CD4-positive, alpha-beta memory T cell (primary cell): ENCODE measurements at regions of chr17 and their contacts with region 1.

Region 1: DNA sequence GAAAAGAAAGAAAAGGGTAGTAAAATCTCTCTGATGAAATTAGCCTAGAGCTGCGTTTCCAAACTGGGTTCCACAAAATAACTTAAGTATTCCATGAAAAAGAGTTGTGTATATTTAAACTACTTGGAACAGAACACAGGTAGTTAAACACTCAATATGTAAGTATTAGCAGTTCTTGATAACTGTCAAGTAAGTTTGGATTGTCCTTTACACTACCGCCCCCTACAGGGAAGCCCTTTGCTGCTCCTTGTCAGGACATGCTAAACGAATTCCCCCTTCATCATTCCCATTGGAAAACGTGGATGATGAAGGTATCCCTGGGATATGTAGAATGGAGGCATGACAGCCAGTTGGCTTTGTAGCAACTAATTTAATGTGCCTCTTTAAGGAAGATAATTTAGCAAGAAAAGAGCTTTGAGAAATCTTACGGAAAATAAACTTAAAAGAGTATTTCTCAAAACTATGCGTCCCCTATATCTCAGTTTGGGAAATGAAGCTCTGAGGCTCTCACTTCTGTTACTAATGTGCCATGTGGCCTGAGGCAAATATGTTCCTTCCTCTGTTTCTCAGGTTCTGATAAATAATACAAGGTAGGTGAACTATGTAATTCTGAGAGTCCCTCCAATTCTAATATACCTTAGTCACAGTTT is 18.8 kb downstream of the NCBP3 start:
- DNase-seq: peak; percentile 67 to 79 (median 74)
- H3K4me3 ChIP-seq: no peak overlapping the region
- H3K4me3 Mint-ChIP-seq: no peak overlapping the region
- H3K27ac ChIP-seq: no peak overlapping the region
- H3K27ac Mint-ChIP-seq: peak overlapping the region in 3 of 7 donors; percentile 42 to 74 (median 70)
- H3K4me1 ChIP-seq: no peaks in the 10 kb centered on the region
- H3K4me1 Mint-ChIP-seq: peaks cover 1 to 5% (median 4%) of the 10 kb centered on the region in 4 donors
- H3K27me3 ChIP-seq: no peaks in the 10 kb centered on the region
- H3K27me3 Mint-ChIP-seq: no peaks in the 10 kb centered on the region

Region 2: GRCh38 chr17:3048767-3049471 is 778.3 kb before region 1 on chr17:
- CTCF ChIA-PET with region 1: no interaction called
- POLR2A ChIA-PET with region 1: no interaction called
- intact Hi-C with region 1: loop called (anchors 5 kb)
- DNase-seq: peak; percentile 88 to 95 (median 93)
- H3K4me3 ChIP-seq: peak overlapping the region; percentile 66 to 94
- H3K4me3 Mint-ChIP-seq: peak overlapping the region; percentile 89 to 96 (median 94)
- H3K27ac ChIP-seq: peak overlapping the region; percentile 48
- H3K27ac Mint-ChIP-seq: peak overlapping the region; percentile 76 to 93 (median 91)
- H3K4me1 ChIP-seq: peaks cover 15% of the 10 kb centered on the region
- H3K4me1 Mint-ChIP-seq: peaks cover 0 to 14% (median 6%) of the 10 kb centered on the region in 4 donors
- H3K27me3 ChIP-seq: no peaks in the 10 kb centered on the region
- H3K27me3 Mint-ChIP-seq: no peaks in the 10 kb centered on the region

Region 3: GRCh38 chr17:3683054-3683511 is 144.2 kb before region 1 on chr17:
- CTCF ChIA-PET with region 1: interaction called, 36 read pairs
- POLR2A ChIA-PET with region 1: no interaction called
- intact Hi-C with region 1: loop called (anchors 2 kb)
- DNase-seq: peak in 4 of 5 donors; percentile 55 to 62 (median 58)
- H3K4me3 ChIP-seq: no peak overlapping the region
- H3K4me3 Mint-ChIP-seq: peak overlapping the region in 1 of 8 donors; percentile 21
- H3K27ac ChIP-seq: no peak overlapping the region
- H3K27ac Mint-ChIP-seq: peak overlapping the region in 2 of 7 donors; percentile 65 to 70
- H3K4me1 ChIP-seq: peaks cover 9% of the 10 kb centered on the region
- H3K4me1 Mint-ChIP-seq: peaks cover 6 to 25% (median 7%) of the 10 kb centered on the region in 4 donors
- H3K27me3 ChIP-seq: no peaks in the 10 kb centered on the region
- H3K27me3 Mint-ChIP-seq: no peaks in the 10 kb centered on the region

Region 4: DNA sequence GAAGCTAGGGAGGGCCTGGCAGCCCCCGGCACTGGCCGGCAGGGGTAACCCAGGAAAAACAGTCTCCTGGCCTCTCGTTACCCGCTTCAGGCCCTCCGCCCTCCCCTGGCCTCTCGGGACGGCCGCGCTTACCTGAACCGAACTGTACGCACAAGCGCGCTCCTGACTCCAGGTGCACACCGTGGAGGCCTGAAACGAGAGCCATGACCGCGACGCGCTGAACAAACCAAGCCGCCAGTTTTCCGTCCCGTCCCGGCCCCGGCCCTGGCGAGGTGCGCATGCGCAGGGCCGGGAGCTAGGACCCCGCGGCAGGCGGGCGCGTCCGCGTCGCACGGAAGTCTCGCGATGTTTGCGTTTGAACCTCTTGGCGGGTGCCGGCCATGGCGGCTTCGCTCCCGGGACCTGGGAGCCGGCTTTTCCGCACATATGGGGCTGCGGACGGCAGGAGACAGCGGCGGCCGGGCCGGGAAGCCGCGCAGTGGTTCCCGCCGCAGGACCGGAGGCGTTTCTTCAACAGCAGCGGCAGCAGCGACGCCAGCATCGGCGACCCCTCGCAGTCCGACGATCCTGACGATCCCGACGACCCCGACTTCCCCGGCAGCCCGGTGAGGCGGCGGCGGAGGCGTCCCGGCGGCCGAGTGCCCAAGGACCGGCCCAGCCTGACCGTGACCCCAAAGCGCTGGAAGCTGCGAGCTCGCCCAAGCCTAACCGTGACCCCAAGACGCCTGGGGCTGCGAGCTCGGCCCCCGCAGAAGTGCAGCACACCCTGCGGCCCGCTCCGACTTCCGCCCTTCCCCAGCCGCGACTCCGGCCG is 103.5 kb before region 1 on chr17 and contains the start of gene HASPIN:
- CTCF ChIA-PET with region 1: interaction called, 10 read pairs
- POLR2A ChIA-PET with region 1: no interaction called
- intact Hi-C with region 1: no loop called
- DNase-seq: peak; percentile 88 to 92 (median 91)
- H3K4me3 ChIP-seq: peak within 1 kb of the TSS; percentile 59 to 95
- H3K4me3 Mint-ChIP-seq: peak within 1 kb of the TSS; percentile 86 to 95 (median 94)
- H3K27ac ChIP-seq: peak within 1 kb of the TSS; percentile 74
- H3K27ac Mint-ChIP-seq: peak within 1 kb of the TSS; percentile 75 to 95 (median 93)
- H3K4me1 ChIP-seq: peaks cover 36% of the 10 kb centered on the region
- H3K4me1 Mint-ChIP-seq: peaks cover 15 to 44% (median 28%) of the 10 kb centered on the region in 4 donors
- H3K27me3 ChIP-seq: no peaks in the 10 kb centered on the region
- H3K27me3 Mint-ChIP-seq: no peaks in the 10 kb centered on the region
- total RNA-seq, gene HASPIN: 0.28 to 0.41 TPM

Region 5: DNA sequence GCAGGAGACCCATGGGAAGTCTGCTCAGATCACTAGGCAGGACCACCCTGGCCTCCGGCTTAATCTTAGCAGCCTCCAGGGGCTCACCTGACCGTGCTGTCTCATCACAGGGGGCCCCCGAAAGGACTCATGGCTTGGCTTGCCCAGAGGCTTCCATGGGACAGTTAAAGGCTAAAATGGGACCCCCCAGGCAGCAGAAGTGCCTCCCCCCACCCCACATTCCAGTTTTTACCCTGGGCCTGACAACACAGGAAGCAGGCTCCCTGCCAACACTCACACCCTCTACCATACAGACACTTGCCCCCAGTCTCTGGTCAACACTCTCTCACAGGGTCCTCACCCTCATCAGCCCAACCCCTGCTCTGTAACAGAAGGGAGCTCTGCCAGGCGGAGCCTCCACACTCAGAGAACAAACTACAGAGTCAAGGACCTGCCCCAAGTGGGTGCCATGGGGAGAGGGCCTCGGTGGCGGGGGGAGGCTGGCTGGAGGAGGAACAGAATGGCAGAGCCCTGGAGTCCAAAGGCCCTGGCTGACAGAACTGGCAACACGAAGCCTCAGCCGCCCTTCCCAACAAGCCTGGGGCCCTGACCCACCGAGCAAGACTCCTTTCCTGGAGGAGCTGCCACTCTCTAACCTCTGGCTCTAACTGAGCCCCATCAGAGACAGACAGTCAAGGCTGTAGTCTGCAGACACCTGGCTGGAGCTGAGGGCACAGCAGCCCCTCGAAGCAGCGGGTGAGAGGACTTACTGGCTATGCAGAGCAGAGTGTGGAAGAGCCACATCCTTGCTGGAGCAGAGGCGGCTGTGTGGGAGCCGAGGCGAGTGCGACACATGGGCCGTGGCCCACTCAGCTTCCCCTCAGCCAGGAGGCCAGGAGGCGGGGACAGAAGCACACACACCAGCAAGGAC is 26.6 kb before region 1 on chr17 and contains the start of gene ITGAE:
- CTCF ChIA-PET with region 1: no interaction called
- POLR2A ChIA-PET with region 1: no interaction called
- intact Hi-C with region 1: no loop called
- DNase-seq: no peak
- H3K4me3 ChIP-seq: no peak within 1 kb of the TSS
- H3K4me3 Mint-ChIP-seq: peak within 1 kb of the TSS in 3 of 8 donors; percentile 44 to 63 (median 61)
- H3K27ac ChIP-seq: no peak within 1 kb of the TSS
- H3K27ac Mint-ChIP-seq: peak within 1 kb of the TSS in 2 of 7 donors; percentile 36 to 65
- H3K4me1 ChIP-seq: peaks cover 13% of the 10 kb centered on the region
- H3K4me1 Mint-ChIP-seq: peaks cover 7 to 21% (median 13%) of the 10 kb centered on the region in 4 donors
- H3K27me3 ChIP-seq: no peaks in the 10 kb centered on the region
- H3K27me3 Mint-ChIP-seq: no peaks in the 10 kb centered on the region
- total RNA-seq, gene ITGAE: 17.2 to 18.7 TPM

Region 6: GRCh38 chr17:3815925-3816324 is 11.3 kb before region 1 on chr17:
- CTCF ChIA-PET with region 1: interaction called, 10 read pairs
- POLR2A ChIA-PET with region 1: no interaction called
- intact Hi-C with region 1: no loop called
- DNase-seq: no peak
- H3K4me3 ChIP-seq: no peak overlapping the region
- H3K4me3 Mint-ChIP-seq: no peak overlapping the region
- H3K27ac ChIP-seq: no peak overlapping the region
- H3K27ac Mint-ChIP-seq: no peak overlapping the region
- H3K4me1 ChIP-seq: no peaks in the 10 kb centered on the region
- H3K4me1 Mint-ChIP-seq: no peaks in the 10 kb centered on the region
- H3K27me3 ChIP-seq: no peaks in the 10 kb centered on the region
- H3K27me3 Mint-ChIP-seq: no peaks in the 10 kb centered on the region

Region 7: GRCh38 chr17:5155495-5155894 is 1328.2 kb after region 1 on chr17:
- CTCF ChIA-PET with region 1: no interaction called
- POLR2A ChIA-PET with region 1: no interaction called
- intact Hi-C with region 1: no loop called
- DNase-seq: no peak
- H3K4me3 ChIP-seq: no peak overlapping the region
- H3K4me3 Mint-ChIP-seq: no peak overlapping the region
- H3K27ac ChIP-seq: no peak overlapping the region
- H3K27ac Mint-ChIP-seq: no peak overlapping the region
- H3K4me1 ChIP-seq: no peaks in the 10 kb centered on the region
- H3K4me1 Mint-ChIP-seq: no peaks in the 10 kb centered on the region
- H3K27me3 ChIP-seq: no peaks in the 10 kb centered on the region
- H3K27me3 Mint-ChIP-seq: peaks cover 13 to 20% of the 10 kb centered on the region in 2 donors